HCT116 (cell line): ENCODE measurements at regions of chr22 and their contacts with region 1.

Region 1: DNA sequence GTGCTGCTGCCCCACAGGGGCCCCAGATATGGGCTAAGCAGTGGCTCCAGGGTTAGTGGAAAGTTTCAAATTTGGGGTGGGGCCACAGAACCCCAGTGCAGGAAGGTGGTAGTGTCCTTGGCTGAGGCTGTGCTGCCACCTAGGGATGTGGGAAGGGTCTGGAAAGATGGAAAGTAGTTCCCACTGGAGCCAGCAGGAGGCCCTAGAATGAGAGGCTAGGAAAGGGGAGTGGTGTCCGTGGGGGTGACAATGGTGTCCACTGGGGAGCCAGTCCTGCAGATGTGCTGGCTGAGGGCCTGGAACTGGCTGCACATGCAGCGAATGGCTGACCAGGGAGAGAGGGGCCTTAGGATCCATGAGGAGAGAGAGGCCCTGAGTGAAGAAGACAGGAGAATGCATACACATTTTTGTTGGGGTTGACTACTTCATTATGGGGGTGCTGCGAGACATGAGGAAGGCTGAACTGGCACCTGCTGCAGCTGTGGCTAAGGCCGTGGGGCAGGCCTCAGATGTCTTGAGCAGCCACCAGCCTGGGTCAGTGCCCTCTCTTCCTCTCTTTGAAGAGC is 21.1 kb downstream of the RFPL3 start:
- DNase-seq: peak; percentile 54
- ATAC-seq: peak; percentile 99
- H3K4me3 ChIP-seq: no peak overlapping the region
- H3K27ac ChIP-seq: no peak overlapping the region
- H3K4me1 ChIP-seq: no peaks in the 10 kb centered on the region; a peak in 1 of 4 replicates
- H3K27me3 ChIP-seq: no peaks in the 10 kb centered on the region
- CTCF ChIP-seq: peak; percentile 98
- POLR2A ChIP-seq: no peak
- RAD21 ChIP-seq: peak; percentile 80

Region 2: GRCh38 chr22:32202539-32203180 is 176.1 kb before region 1 on chr22:
- CTCF ChIA-PET with region 1: interaction called, 3 read pairs
- POLR2A ChIA-PET with region 1: no interaction called
- RAD21 ChIA-PET with region 1: no interaction called
- intact Hi-C with region 1: loop called (anchors 10 kb)
- DNase-seq: peak; percentile 50
- ATAC-seq: peak; percentile 55
- H3K4me3 ChIP-seq: no peak overlapping the region
- H3K27ac ChIP-seq: no peak overlapping the region
- H3K4me1 ChIP-seq: peaks cover 27 to 45% of the 10 kb centered on the region in 2 experiments
- H3K27me3 ChIP-seq: no peaks in the 10 kb centered on the region
- CTCF ChIP-seq: peak; percentile 62 to 73 (median 72); a peak in 5 of 6 replicates
- POLR2A ChIP-seq: no peak
- RAD21 ChIP-seq: peak; percentile 43; the same call in 1 of the 2 replicates